ENCODE measurements at regions of chr4 and their contacts with region 1.

Region 1: DNA sequence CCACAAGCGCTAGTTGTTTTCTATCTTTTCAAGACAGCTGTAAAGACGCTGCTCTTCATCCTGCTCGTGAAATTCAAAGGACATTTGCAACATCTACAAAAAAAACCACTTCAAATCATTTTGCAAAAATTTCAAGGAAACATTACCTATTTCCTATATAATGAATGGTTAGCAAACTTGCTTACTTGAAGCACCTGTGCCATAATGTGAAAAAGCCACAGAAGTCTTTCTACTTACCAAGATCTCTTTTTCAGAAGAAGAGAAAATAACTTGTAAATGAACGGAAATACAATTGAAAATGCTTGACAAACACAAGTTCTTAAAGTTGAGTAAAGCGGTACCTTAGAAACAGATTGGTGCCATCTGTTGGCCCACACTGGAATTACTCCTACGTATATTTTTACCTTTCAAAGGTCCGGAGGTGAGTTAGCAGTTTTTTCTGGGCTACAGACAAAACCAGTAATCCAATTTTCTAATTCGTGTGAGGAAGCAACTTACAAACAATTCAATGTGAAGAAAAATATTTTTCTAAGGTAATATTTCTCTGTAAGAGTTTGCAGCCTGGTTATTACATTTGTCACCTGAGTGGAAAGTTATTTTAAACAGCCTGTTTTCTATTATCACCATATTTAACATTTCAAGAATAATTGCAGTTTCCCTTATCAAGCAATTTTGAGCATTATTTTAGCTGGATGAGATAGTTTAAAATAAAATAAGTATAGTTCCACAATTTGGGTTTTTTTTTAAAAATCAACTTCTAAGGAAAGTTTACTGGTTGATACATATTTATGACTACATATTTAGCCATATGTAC is at the start of gene TLR6:
- DNase-seq: peak; percentile 83
- H3K4me3 Mint-ChIP-seq: peak within 1 kb of the TSS; percentile 75
- H3K27ac Mint-ChIP-seq: peak within 1 kb of the TSS; percentile 91
- H3K4me1 Mint-ChIP-seq: peaks cover 35% of the 10 kb centered on the region
- H3K27me3 Mint-ChIP-seq: no peaks in the 10 kb centered on the region
- CTCF ChIP-seq: peak; percentile 67
- total RNA-seq, gene TLR6: 7.7 and 11.4 TPM in 2 replicates

Region 2: GRCh38 chr4:38062088-38062893 is 794.4 kb before region 1 on chr4:
- CTCF ChIA-PET with region 1: no interaction called
- POLR2A ChIA-PET with region 1: no interaction called
- intact Hi-C with region 1: loop called (anchors 5 kb)
- DNase-seq: peak; percentile 83
- H3K4me3 Mint-ChIP-seq: peak overlapping the region; percentile 66
- H3K27ac Mint-ChIP-seq: peak overlapping the region; percentile 57
- H3K4me1 Mint-ChIP-seq: peaks cover 5% of the 10 kb centered on the region
- H3K27me3 Mint-ChIP-seq: no peaks in the 10 kb centered on the region
- CTCF ChIP-seq: peak; percentile 83

Region 3: DNA sequence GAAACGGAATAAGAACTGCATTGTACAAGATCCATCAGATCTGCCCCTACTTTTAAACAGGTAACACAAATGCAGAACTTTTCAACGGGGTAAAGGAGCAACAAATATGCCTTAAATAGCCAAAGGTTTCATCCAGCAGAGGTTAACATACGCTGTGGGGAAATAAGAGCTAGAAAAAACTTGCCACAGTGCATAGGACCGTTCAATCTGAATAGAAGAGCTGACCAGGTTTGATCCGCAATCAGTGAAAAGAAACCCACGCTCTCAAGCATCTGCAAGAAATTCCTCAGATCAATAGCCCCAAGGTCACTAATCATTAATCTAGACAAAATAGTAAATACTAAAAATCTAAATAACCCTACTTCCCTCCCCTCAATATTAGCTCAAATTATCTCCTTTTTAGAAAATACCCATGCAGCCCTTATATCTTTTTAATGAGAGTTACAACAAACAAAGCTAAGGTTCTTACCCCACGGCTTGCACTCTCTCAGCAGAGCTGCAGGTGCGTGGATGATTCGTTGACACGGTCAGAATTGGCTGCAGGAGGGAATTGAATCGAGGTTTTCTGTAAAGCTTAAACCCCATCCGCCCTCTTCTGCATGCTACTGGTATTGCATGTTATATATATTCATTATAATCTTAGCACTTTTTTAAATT is 74.2 kb before region 1 on chr4 and contains the start of gene TLR10:
- CTCF ChIA-PET with region 1: interaction called, 13 read pairs
- POLR2A ChIA-PET with region 1: interaction called, 5 read pairs
- intact Hi-C with region 1: no loop called
- DNase-seq: peak; percentile 56
- H3K4me3 Mint-ChIP-seq: no peak within 1 kb of the TSS
- H3K27ac Mint-ChIP-seq: no peak within 1 kb of the TSS
- H3K4me1 Mint-ChIP-seq: no peaks in the 10 kb centered on the region
- H3K27me3 Mint-ChIP-seq: no peaks in the 10 kb centered on the region
- CTCF ChIP-seq: peak; percentile 54
- total RNA-seq, gene TLR10: not detected in 2 replicates

Region 4: DNA sequence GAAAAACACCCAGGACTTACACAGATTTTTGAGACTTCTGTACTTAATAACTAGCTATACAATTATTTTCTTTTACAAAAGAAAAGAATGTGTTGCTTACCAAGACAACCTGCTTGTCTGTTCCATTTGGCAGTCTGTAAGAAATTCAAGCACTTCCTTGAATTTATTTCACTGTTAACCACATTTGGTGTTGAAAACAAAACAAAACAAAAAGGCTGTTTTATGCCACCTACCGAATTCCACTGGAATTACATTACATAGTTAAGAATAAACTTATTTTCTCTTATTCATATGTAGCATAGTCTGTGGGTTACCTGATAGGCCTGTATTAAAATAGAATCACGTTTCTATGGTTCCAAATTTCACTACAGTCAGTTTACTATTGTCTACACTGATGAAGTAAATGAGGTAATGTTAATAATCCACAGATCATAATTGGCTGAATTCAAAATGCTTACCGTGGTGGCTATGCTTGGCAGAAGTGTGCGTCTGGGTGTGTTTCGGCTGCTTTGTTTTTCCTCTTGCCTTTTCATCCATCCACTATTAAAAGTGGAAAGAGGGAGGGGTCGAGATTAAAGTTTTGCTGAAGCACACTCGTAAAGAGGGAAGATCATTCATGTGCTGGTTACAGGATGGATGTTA is 52.0 kb before region 1 on chr4 and contains the start of gene TLR1:
- CTCF ChIA-PET with region 1: interaction called, 10 read pairs
- POLR2A ChIA-PET with region 1: interaction called, 35 read pairs
- intact Hi-C with region 1: loop called (anchors 2 kb)
- DNase-seq: peak; percentile 70
- H3K4me3 Mint-ChIP-seq: peak within 1 kb of the TSS; percentile 70
- H3K27ac Mint-ChIP-seq: peak within 1 kb of the TSS; percentile 97
- H3K4me1 Mint-ChIP-seq: peaks cover 25% of the 10 kb centered on the region
- H3K27me3 Mint-ChIP-seq: no peaks in the 10 kb centered on the region
- CTCF ChIP-seq: peak; percentile 40
- total RNA-seq, gene TLR1: 1.9 and 2.2 TPM in 2 replicates

Region 5: GRCh38 chr4:38867478-38868058 is 10.8 kb after region 1 on chr4 and contains the start of gene FAM114A1:
- CTCF ChIA-PET with region 1: interaction called, 17 read pairs
- POLR2A ChIA-PET with region 1: interaction called, 13 read pairs
- intact Hi-C with region 1: no loop called
- DNase-seq: peak; percentile 74
- H3K4me3 Mint-ChIP-seq: peak within 1 kb of the TSS; percentile 75
- H3K27ac Mint-ChIP-seq: peak within 1 kb of the TSS; percentile 91
- H3K4me1 Mint-ChIP-seq: peaks cover 21% of the 10 kb centered on the region
- H3K27me3 Mint-ChIP-seq: no peaks in the 10 kb centered on the region
- CTCF ChIP-seq: no peak
- total RNA-seq, gene FAM114A1: 22.7 and 38.9 TPM in 2 replicates

Region 6: DNA sequence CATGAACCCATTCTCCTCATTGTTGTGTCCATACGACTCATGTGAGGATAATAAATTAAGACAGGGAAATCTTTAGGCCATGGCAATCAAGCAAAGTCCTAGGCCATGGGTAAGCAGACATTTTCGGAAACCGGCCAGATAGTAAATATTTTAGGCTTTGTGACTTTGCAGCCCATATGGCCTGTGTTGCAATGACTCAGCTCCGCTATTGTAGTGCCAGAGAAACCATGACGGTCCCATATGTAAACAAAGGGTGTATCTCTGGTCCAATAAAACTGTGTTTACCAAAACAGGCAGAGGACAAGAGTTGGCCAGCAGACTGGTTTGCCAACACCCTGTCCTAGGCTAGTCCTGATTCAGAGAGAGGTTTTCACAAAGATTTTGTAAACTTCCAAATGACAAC is 15.9 kb after region 1 on chr4:
- CTCF ChIA-PET with region 1: interaction called, 20 read pairs
- POLR2A ChIA-PET with region 1: interaction called, 13 read pairs
- intact Hi-C with region 1: no loop called
- DNase-seq: peak; percentile 69
- H3K4me3 Mint-ChIP-seq: no peak overlapping the region
- H3K27ac Mint-ChIP-seq: no peak overlapping the region
- H3K4me1 Mint-ChIP-seq: peaks cover 26% of the 10 kb centered on the region
- H3K27me3 Mint-ChIP-seq: no peaks in the 10 kb centered on the region
- CTCF ChIP-seq: no peak

Region 7: GRCh38 chr4:38905652-38906385 is 49.1 kb after region 1 on chr4:
- CTCF ChIA-PET with region 1: no interaction called
- POLR2A ChIA-PET with region 1: no interaction called
- intact Hi-C with region 1: no loop called
- DNase-seq: no peak
- H3K4me3 Mint-ChIP-seq: no peak overlapping the region
- H3K27ac Mint-ChIP-seq: no peak overlapping the region
- H3K4me1 Mint-ChIP-seq: no peaks in the 10 kb centered on the region
- H3K27me3 Mint-ChIP-seq: no peaks in the 10 kb centered on the region
- CTCF ChIP-seq: no peak

Region 8: GRCh38 chr4:38976308-38976707 is 119.6 kb after region 1 on chr4:
- CTCF ChIA-PET with region 1: no interaction called
- POLR2A ChIA-PET with region 1: no interaction called
- intact Hi-C with region 1: no loop called
- DNase-seq: no peak
- H3K4me3 Mint-ChIP-seq: no peak overlapping the region
- H3K27ac Mint-ChIP-seq: no peak overlapping the region
- H3K4me1 Mint-ChIP-seq: no peaks in the 10 kb centered on the region
- H3K27me3 Mint-ChIP-seq: no peaks in the 10 kb centered on the region
- CTCF ChIP-seq: no peak

Measured in MCF 10A (cell line).